CD8-positive, alpha-beta memory T cell (primary cell): ENCODE measurements at regions of chr3 and their contacts with region 1.

Region 1: DNA sequence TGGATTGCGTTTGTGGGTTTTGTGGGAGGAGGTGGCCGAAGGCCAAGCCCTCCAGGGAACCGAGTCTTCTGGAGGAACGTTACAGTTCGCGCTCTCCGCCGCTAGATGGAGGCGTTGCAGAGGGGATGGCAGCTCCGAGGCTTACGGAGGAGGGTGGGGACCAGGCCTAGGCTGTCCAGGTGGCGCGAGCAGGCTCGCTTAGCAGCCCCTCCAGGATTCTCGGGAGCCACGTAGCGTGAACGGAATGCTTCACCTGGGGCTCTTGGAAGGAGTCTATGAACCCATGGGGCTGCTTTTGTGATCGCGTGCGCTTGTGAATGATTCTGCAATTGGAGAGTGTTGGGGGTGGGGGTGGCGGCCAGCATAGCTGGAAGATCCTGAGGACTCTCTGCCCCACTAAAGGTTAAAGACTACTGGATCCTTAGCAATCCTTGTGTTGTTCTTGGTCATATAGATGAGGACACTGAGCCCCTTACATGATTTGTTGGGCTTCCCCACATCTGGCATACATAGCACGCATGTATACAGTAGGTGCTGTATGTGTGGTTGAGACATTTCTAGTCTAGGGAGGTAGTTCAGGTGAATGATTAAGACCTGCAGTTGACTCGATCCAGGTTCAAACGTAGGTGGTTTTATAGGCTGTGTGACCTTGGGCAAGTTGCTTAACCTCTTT is 25.7 kb downstream of the FAM3D start:
- DNase-seq: peak in 3 of 5 donors; percentile 8 to 20 (median 10)
- H3K4me3 ChIP-seq: no peak overlapping the region
- H3K4me3 Mint-ChIP-seq: no peak overlapping the region
- H3K27ac ChIP-seq: no peak overlapping the region
- H3K27ac Mint-ChIP-seq: no peak overlapping the region
- H3K4me1 ChIP-seq: no peaks in the 10 kb centered on the region
- H3K4me1 Mint-ChIP-seq: no peaks in the 10 kb centered on the region
- H3K27me3 ChIP-seq: no peaks in the 10 kb centered on the region
- H3K27me3 Mint-ChIP-seq: peaks cover 6 to 19% of the 10 kb centered on the region in 2 donors

Region 2: GRCh38 chr3:58630076-58630709 is 10.6 kb before region 1 on chr3:
- CTCF ChIA-PET with region 1: interaction called, 21 read pairs
- POLR2A ChIA-PET with region 1: no interaction called
- DNase-seq: peak; percentile 17 to 68 (median 41)
- H3K4me3 ChIP-seq: no peak overlapping the region
- H3K4me3 Mint-ChIP-seq: no peak overlapping the region
- H3K27ac ChIP-seq: no peak overlapping the region
- H3K27ac Mint-ChIP-seq: peak overlapping the region in 1 of 8 donors; percentile 25
- H3K4me1 ChIP-seq: no peaks in the 10 kb centered on the region
- H3K4me1 Mint-ChIP-seq: peaks cover 0 to 6% (median 3%) of the 10 kb centered on the region in 3 donors
- H3K27me3 ChIP-seq: no peaks in the 10 kb centered on the region
- H3K27me3 Mint-ChIP-seq: peaks cover 6 to 23% of the 10 kb centered on the region in 2 donors